ENCODE measurements at regions of chr1 and their contacts with region 1.

Region 1: GRCh38 chr1:37458528-37458927 is 15.9 kb upstream of the ZC3H12A start:
- DNase-seq: no peak
- ATAC-seq: peak; percentile 59
- H3K4me3 Mint-ChIP-seq: no peak overlapping the region
- H3K27ac Mint-ChIP-seq: no peak overlapping the region
- H3K4me1 Mint-ChIP-seq: peaks cover 12% of the 10 kb centered on the region
- H3K27me3 Mint-ChIP-seq: no peaks in the 10 kb centered on the region
- CTCF ChIP-seq: no peak

Region 2: GRCh38 chr1:37403170-37403569 is 55.4 kb before region 1 on chr1:
- CTCF ChIA-PET with region 1: no interaction called
- POLR2A ChIA-PET with region 1: no interaction called
- DNase-seq: no peak
- ATAC-seq: peak; percentile 74
- H3K4me3 Mint-ChIP-seq: no peak overlapping the region
- H3K27ac Mint-ChIP-seq: no peak overlapping the region
- H3K4me1 Mint-ChIP-seq: no peaks in the 10 kb centered on the region
- H3K27me3 Mint-ChIP-seq: no peaks in the 10 kb centered on the region; the same call in 1 of the 2 replicates
- CTCF ChIP-seq: no peak

Region 3: DNA sequence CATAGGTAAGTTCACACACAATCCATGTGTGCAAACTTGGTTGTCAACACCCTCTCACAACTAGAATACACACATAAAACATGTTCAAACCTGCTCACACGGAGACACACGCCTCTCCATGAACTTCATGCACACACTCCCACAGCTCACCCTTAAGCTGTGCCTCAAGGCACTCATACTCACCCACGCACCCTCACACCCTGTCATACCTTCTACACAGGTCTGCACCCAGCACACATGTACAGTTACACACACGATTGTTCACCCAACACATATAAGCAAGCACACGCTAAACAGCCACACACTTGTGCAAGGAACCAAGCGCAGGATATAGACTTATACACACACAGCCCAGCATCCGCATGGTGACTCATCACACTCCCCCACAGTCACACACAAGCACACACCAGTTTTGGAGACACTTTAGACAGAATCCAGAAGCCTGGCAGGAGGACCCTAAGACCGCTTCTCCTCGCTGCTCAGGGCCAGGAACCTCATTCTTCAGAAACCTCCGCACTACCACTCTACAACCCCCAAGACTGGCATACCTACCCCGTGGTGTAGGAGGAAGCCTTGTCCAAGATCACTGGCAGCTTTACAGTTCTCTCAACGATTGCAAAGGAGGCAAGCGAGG is 42.8 kb before region 1 on chr1:
- CTCF ChIA-PET with region 1: no interaction called
- POLR2A ChIA-PET with region 1: no interaction called
- DNase-seq: no peak
- ATAC-seq: no peak
- H3K4me3 Mint-ChIP-seq: no peak overlapping the region
- H3K27ac Mint-ChIP-seq: no peak overlapping the region
- H3K4me1 Mint-ChIP-seq: peaks cover 4% of the 10 kb centered on the region; the same call in 1 of the 2 replicates
- H3K27me3 Mint-ChIP-seq: peaks cover 3% of the 10 kb centered on the region; the same call in 1 of the 2 replicates
- CTCF ChIP-seq: no peak

Region 4: GRCh38 chr1:37474046-37474759 is 15.7 kb after region 1 on chr1 and contains the start of gene ZC3H12A:
- CTCF ChIA-PET with region 1: interaction called, 16 read pairs
- POLR2A ChIA-PET with region 1: interaction called, 4 read pairs
- DNase-seq: peak; percentile 83
- ATAC-seq: peak; percentile 67
- H3K4me3 Mint-ChIP-seq: peak within 1 kb of the TSS; percentile 73
- H3K27ac Mint-ChIP-seq: peak within 1 kb of the TSS; percentile 27; the same call in 1 of the 2 replicates
- H3K4me1 Mint-ChIP-seq: peaks cover 57% of the 10 kb centered on the region
- H3K27me3 Mint-ChIP-seq: peaks cover 23% of the 10 kb centered on the region
- CTCF ChIP-seq: no peak
- total RNA-seq, gene ZC3H12A: 8.4 to 10.9 TPM (median 9.6 TPM) in 3 replicates

Region 5: DNA sequence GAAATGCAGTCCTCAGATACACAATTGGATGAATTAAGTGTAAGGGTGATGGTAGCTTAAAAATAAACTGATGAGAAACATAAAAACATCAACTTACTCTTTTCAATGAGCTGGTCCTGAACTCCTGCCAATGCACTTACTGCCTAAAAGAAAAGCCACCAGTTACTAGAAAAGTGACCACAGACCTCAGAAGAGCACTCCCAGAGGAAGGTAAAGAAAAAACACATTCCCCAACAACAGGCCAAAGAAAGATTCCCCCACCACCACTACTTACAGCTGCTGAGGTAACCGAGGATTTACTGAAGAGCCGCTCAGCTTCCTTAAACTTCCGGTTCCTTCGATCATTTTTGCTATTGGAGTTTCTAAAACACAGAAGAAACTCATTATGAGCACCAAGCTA is 50.7 kb after region 1 on chr1:
- CTCF ChIA-PET with region 1: interaction called, 24 read pairs
- POLR2A ChIA-PET with region 1: no interaction called
- DNase-seq: no peak
- ATAC-seq: peak; percentile 60
- H3K4me3 Mint-ChIP-seq: no peak overlapping the region
- H3K27ac Mint-ChIP-seq: no peak overlapping the region
- H3K4me1 Mint-ChIP-seq: peaks cover 5% of the 10 kb centered on the region
- H3K27me3 Mint-ChIP-seq: no peaks in the 10 kb centered on the region
- CTCF ChIP-seq: no peak